ENCODE measurements at regions of chr15 and their contacts with region 1.

Region 1: DNA sequence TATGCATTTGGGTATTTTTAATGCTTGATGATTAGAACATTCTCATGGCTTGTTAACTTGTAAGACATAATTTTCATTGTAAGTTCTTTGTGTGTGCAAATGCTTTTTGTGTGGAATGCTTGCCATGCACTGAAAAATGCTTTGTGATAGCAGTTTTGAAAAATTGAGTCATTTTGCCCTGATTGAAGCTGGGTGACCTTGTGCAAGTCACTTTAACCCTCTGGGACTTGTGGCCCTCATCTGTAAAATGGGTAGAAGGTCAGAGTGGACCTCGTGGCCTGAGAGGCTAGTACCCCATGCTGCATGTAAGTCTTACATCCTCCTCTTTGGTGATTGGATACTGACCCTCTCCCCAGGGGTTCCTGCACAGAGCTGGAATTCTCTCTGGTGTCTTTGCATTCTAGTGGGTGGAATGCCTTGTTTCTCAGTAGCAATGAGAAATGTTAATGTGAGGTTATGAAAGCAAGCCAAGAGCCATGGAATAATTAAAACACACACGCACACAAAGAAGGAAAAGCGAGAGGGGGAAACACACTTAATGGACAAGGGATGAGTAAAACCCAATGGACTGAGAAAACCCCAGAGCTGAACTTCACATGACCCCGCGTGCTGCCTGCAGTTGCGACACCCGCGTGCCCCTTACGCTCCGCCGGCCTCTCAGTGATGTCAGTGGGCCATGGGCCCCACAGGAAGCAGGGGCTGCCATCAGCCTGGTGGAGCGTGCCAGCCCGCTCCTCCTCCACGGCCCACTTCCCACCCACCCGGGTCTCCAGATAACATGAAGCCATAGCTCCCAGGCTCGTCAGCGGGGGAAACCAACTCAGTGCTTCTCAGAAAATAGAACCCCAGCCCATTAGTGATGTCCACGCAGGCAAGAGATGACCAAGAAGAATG is 44.0 kb downstream of the SMAD3 start:
- DNase-seq: peak; percentile 87
- ATAC-seq: peak; percentile 41 to 74

Region 2: GRCh38 chr15:67024314-67024997 is 84.9 kb before region 1 on chr15:
- intact Hi-C with region 1: loop called in 1 of 2 experiments (anchors 10 kb)
- DNase-seq: peak; percentile 81
- ATAC-seq: peak; percentile 93

Region 3: GRCh38 chr15:67076147-67076843 is 33.1 kb before region 1 on chr15:
- intact Hi-C with region 1: no loop called
- DNase-seq: peak; percentile 61
- ATAC-seq: no peak

Region 4: DNA sequence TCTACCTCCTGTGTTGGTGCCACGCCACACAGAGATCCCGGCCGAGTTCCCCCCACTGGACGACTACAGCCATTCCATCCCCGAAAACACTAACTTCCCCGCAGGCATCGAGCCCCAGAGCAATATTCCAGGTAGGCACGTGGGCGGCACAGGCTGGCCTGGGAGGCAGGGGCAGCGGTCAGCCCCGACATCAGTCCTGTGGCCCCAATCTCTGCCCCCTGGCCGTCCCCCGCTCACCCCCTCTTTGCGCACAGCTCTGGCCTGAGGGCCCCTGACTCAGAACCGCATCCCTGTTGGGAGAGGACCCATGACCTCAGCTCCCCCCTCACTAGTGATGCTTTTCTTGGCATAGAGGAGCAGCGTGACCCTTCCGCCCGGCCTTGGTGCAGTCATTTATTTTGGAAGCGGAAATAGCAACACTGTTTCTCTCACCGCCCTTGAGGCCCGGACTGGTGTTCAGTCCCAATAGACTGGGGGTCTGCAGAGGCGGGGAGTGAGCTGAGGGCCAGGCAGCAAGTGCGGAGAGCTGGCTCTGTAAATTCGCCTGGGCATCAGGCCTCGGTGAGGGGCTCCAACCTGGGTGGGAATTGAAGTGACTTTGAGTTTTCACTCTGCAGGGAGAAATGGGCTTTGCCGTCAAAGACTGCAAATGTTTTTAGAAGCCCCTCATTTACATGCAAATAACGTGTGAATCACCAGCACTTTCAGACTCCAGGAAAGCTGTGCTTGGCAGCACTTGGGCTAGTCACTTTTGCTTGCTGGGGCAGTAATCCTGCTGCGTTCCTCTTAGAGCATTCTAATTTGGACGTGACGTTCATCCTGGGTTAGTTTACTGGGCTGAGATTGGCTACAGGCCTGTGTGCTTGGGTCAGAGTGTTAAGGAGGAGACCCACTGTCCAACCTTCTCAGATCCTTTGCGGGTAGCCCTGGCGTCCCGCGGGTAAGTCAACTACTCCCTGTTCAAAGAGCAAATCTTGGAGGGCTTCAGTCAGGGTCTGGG is 56.2 kb after region 1 on chr15:
- intact Hi-C with region 1: loop called in 1 of 2 experiments (anchors 10 kb)
- DNase-seq: peak; percentile 79
- ATAC-seq: peak; percentile 60 to 84